ENCODE measurements at regions of chr4 and their contacts with region 1.

Region 1: GRCh38 chr4:75786526-75786925 is 62.1 kb downstream of the USO1 start:
- DNase-seq: no peak
- ATAC-seq: no peak
- H3K4me3 ChIP-seq: no peak overlapping the region
- H3K4me3 Mint-ChIP-seq: no peak overlapping the region
- H3K27ac ChIP-seq: no peak overlapping the region
- H3K27ac Mint-ChIP-seq: no peak overlapping the region
- H3K4me1 ChIP-seq: no peaks in the 10 kb centered on the region
- H3K4me1 Mint-ChIP-seq: peaks cover 0 to 4% (median 0%) of the 10 kb centered on the region in 7 donors
- H3K27me3 ChIP-seq: no peaks in the 10 kb centered on the region
- H3K27me3 Mint-ChIP-seq: no peaks in the 10 kb centered on the region

Region 2: DNA sequence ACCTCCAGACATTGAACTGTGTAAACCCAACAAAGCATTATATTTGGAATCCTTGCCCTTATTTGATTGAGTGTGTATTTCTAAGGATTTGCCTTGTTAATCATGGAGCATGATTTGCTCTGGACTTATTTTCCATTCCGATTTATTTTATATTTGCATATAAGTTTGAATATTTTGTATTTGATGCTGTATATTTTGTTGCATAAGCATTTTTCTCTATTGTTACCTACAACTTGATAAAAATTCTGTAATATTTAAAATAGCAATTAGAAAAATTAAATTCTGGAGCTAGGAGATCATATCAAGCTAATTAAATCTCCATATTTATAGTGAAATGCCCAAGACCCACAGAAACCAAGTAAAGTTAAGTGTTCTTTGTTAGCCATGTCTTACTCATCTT is 14.9 kb before region 1 on chr4:
- CTCF ChIA-PET with region 1: interaction called, 3 read pairs
- POLR2A ChIA-PET with region 1: no interaction called
- intact Hi-C with region 1: loop called in 1 of 2 experiments (anchors 2 kb)
- DNase-seq: no peak
- ATAC-seq: no peak
- H3K4me3 ChIP-seq: no peak overlapping the region
- H3K4me3 Mint-ChIP-seq: no peak overlapping the region
- H3K27ac ChIP-seq: no peak overlapping the region
- H3K27ac Mint-ChIP-seq: no peak overlapping the region
- H3K4me1 ChIP-seq: no peaks in the 10 kb centered on the region
- H3K4me1 Mint-ChIP-seq: peaks cover 0 to 11% (median 7%) of the 10 kb centered on the region in 7 donors
- H3K27me3 ChIP-seq: no peaks in the 10 kb centered on the region
- H3K27me3 Mint-ChIP-seq: no peaks in the 10 kb centered on the region

Region 3: GRCh38 chr4:76117536-76117935 is 331.0 kb after region 1 on chr4:
- CTCF ChIA-PET with region 1: no interaction called
- POLR2A ChIA-PET with region 1: no interaction called
- intact Hi-C with region 1: loop called in 1 of 2 experiments (anchors 10 kb)
- DNase-seq: no peak
- ATAC-seq: no peak
- H3K4me3 ChIP-seq: no peak overlapping the region
- H3K4me3 Mint-ChIP-seq: no peak overlapping the region
- H3K27ac ChIP-seq: no peak overlapping the region
- H3K27ac Mint-ChIP-seq: no peak overlapping the region
- H3K4me1 ChIP-seq: no peaks in the 10 kb centered on the region
- H3K4me1 Mint-ChIP-seq: no peaks in the 10 kb centered on the region
- H3K27me3 ChIP-seq: no peaks in the 10 kb centered on the region
- H3K27me3 Mint-ChIP-seq: no peaks in the 10 kb centered on the region